ENCODE measurements at regions of chr19 and their contacts with region 1.

Region 1: GRCh38 chr19:8475005-8475404 is 27.4 kb downstream of the PRAM1 start:
- DNase-seq: no peak
- H3K4me3 ChIP-seq: no peak overlapping the region
- H3K4me3 Mint-ChIP-seq: peak overlapping the region in 1 of 7 donors; percentile 36
- H3K27ac ChIP-seq: no peak overlapping the region
- H3K27ac Mint-ChIP-seq: no peak overlapping the region
- H3K4me1 ChIP-seq: peaks cover 27% of the 10 kb centered on the region
- H3K4me1 Mint-ChIP-seq: peaks cover 36 to 60% (median 45%) of the 10 kb centered on the region in 3 donors
- H3K27me3 ChIP-seq: no peaks in the 10 kb centered on the region
- H3K27me3 Mint-ChIP-seq: no peaks in the 10 kb centered on the region

Region 2: DNA sequence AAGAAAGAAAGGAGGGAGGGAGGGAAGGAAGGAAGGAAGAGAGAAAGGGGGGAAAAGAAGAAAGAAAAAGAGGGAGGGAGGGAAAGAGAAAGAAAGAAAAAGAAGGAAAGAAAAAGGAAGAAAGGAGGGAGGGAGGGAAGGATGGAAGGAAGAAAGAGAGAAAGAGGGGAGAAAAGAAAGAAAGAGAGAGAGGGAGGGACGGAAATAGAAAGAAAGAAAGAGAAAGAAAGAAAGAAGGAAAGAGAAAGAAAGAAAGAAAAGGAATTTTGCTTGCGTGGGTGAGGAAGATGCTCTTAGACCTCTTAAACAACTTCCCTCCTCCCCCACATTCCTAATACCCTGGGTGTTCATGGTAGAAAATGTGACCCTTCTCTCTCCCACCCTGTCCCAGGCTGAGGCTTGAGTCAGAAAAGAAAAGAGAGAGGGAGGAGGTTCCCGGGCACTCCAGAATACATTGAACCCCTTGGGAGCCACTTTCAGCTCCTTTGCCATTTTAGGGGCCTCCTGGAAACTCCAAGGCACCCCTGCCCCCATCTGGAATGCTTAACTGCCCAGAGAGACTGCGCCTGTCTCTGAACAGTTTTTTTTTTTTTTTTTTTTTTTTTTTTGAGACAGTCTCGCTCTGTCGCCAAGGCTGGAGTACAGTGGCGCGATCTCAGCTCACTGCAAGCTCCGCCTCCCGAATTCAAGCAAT is 122.7 kb before region 1 on chr19:
- CTCF ChIA-PET with region 1: no interaction called
- POLR2A ChIA-PET with region 1: no interaction called
- DNase-seq: no peak
- H3K4me3 ChIP-seq: no peak overlapping the region
- H3K4me3 Mint-ChIP-seq: no peak overlapping the region
- H3K27ac ChIP-seq: no peak overlapping the region
- H3K27ac Mint-ChIP-seq: no peak overlapping the region
- H3K4me1 ChIP-seq: peaks cover 6% of the 10 kb centered on the region
- H3K4me1 Mint-ChIP-seq: peaks cover 2 to 4% (median 3%) of the 10 kb centered on the region in 3 donors
- H3K27me3 ChIP-seq: no peaks in the 10 kb centered on the region
- H3K27me3 Mint-ChIP-seq: peaks cover 13 to 21% of the 10 kb centered on the region in 2 donors

Region 3: GRCh38 chr19:8444645-8445487 is 30.1 kb before region 1 on chr19 and contains the start of gene HNRNPM:
- CTCF ChIA-PET with region 1: no interaction called
- POLR2A ChIA-PET with region 1: interaction called, 10 read pairs
- DNase-seq: peak; percentile 100
- H3K4me3 ChIP-seq: peak within 1 kb of the TSS; percentile 83
- H3K4me3 Mint-ChIP-seq: peak within 1 kb of the TSS; percentile 93 to 100 (median 98)
- H3K27ac ChIP-seq: peak within 1 kb of the TSS; percentile 96
- H3K27ac Mint-ChIP-seq: peak within 1 kb of the TSS; percentile 93 to 100 (median 99)
- H3K4me1 ChIP-seq: peaks cover 39% of the 10 kb centered on the region
- H3K4me1 Mint-ChIP-seq: peaks cover 41 to 50% (median 49%) of the 10 kb centered on the region in 3 donors
- H3K27me3 ChIP-seq: no peaks in the 10 kb centered on the region
- H3K27me3 Mint-ChIP-seq: no peaks in the 10 kb centered on the region
- total RNA-seq, gene HNRNPM: 336 to 338 TPM

Region 4: GRCh38 chr19:8592231-8593009 is 117.4 kb after region 1 on chr19:
- CTCF ChIA-PET with region 1: no interaction called
- POLR2A ChIA-PET with region 1: no interaction called
- DNase-seq: peak; percentile 92 to 98 (median 95)
- H3K4me3 ChIP-seq: peak overlapping the region; percentile 43
- H3K4me3 Mint-ChIP-seq: peak overlapping the region; percentile 57 to 90 (median 86)
- H3K27ac ChIP-seq: no peak overlapping the region
- H3K27ac Mint-ChIP-seq: peak overlapping the region; percentile 51 to 93 (median 80)
- H3K4me1 ChIP-seq: peaks cover 16% of the 10 kb centered on the region
- H3K4me1 Mint-ChIP-seq: peaks cover 14 to 30% (median 18%) of the 10 kb centered on the region in 3 donors
- H3K27me3 ChIP-seq: no peaks in the 10 kb centered on the region
- H3K27me3 Mint-ChIP-seq: peaks cover 0 to 3% of the 10 kb centered on the region in 2 donors